ENCODE measurements at regions of chr17 and their contacts with region 1.

Region 1: DNA sequence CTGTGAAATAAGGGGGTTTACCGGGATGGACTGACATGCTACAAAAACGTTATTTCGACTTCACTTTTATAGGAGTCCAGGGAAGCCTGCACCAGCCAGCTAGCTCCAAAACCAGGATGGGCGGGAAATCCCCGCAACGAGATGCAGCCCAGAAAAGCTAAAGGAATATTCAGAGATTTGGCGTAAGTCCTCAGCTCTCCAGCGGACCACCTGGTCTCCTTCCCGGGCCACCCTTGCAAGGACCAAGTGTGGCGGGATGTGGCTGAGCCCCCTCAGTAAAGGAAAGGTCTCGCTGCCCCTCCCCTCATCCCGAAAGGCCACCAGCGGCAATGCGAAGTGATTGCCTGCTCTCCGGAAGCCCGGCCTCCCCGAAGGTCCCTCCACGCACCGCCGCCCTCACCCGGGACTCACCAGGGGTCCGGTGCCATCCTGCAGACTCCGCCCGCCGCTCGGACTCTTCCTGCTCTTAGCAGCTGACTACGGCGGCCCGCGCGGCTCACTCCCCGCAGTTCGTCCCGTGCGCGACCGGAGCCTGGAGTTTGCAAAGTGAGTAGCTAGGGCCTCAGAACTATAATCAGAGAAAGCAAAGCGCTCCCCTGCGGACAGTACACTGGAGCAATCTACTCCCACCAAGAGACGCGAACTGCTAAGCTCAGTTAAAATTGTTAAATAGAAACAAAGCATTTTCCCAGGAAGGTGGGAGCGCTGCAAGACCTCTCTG is at the start of gene STX8:
- DNase-seq: peak; percentile 88
- ATAC-seq: peak; percentile 58
- H3K4me3 Mint-ChIP-seq: peak within 1 kb of the TSS; percentile 93
- H3K27ac Mint-ChIP-seq: no peak within 1 kb of the TSS; the same call in 1 of the 2 replicates
- H3K4me1 Mint-ChIP-seq: peaks cover 9% of the 10 kb centered on the region
- H3K27me3 Mint-ChIP-seq: peaks cover 4% of the 10 kb centered on the region; the same call in 1 of the 2 replicates
- CTCF ChIP-seq: no peak
- total RNA-seq, gene STX8: 39.9 to 55.6 TPM (median 52.8 TPM) in 3 replicates

Region 2: GRCh38 chr17:9587969-9588656 is 12.6 kb after region 1 on chr17:
- CTCF ChIA-PET with region 1: interaction called, 12 read pairs
- POLR2A ChIA-PET with region 1: no interaction called
- DNase-seq: no peak
- ATAC-seq: no peak
- H3K4me3 Mint-ChIP-seq: no peak overlapping the region
- H3K27ac Mint-ChIP-seq: no peak overlapping the region
- H3K4me1 Mint-ChIP-seq: no peaks in the 10 kb centered on the region
- H3K27me3 Mint-ChIP-seq: no peaks in the 10 kb centered on the region
- CTCF ChIP-seq: no peak

Region 3: DNA sequence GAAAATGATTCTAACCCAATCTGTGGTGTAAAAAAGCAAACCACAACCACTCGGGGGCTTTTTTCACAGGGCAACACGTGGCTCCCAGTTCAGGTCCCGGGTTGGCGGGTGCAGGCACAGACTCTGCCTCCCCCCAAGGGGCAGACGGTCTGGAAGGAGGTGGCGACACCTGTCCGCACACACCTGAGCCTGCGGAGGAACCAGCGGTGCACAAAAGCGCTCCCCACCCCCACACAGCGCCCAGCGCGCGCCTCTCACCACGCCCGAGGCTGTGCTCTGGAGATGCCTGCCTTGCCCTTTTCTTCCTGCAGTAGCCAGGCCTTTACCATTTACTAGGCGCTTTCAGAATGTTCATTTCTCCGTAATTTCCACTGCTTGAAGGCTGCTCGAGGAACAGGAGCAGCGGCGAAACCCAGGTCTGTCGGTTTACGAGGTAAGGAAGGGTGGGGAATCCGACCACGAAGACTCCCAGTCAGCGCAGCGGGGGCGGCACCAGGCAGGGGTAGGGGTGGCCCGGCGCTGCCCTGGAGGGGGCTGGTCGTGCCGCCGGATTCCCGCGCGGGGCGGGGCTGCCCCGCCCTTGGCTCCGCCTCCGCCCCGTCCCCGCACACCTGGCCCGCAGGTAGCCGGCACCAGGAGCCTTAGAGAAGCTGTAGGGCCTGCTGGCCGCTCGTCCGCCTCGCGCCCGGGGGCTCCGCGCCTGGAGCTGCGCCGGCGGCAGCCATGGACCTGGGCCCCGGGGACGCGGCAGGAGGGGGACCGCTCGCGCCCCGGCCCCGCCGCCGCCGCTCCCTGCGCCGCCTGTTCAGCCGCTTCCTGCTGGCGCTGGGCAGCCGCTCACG is 69.6 kb after region 1 on chr17 and contains the start of gene USP43:
- CTCF ChIA-PET with region 1: interaction called, 21 read pairs
- POLR2A ChIA-PET with region 1: interaction called, 5 read pairs
- DNase-seq: peak; percentile 74
- ATAC-seq: peak; percentile 74
- H3K4me3 Mint-ChIP-seq: peak within 1 kb of the TSS; percentile 93
- H3K27ac Mint-ChIP-seq: peak within 1 kb of the TSS; percentile 99
- H3K4me1 Mint-ChIP-seq: peaks cover 41% of the 10 kb centered on the region
- H3K27me3 Mint-ChIP-seq: peaks cover 12% of the 10 kb centered on the region
- CTCF ChIP-seq: no peak
- total RNA-seq, gene USP43: 6.8 to 8.6 TPM (median 7.3 TPM) in 3 replicates

Region 4: GRCh38 chr17:9669531-9670008 is 94.0 kb after region 1 on chr17:
- CTCF ChIA-PET with region 1: interaction called, 40 read pairs
- POLR2A ChIA-PET with region 1: no interaction called
- DNase-seq: no peak
- ATAC-seq: no peak
- H3K4me3 Mint-ChIP-seq: no peak overlapping the region
- H3K27ac Mint-ChIP-seq: 0 out of 2 replicates have a peak overlapping the region, but pooled peaks have one; percentile 33
- H3K4me1 Mint-ChIP-seq: peaks cover 33% of the 10 kb centered on the region
- H3K27me3 Mint-ChIP-seq: no peaks in the 10 kb centered on the region
- CTCF ChIP-seq: no peak

Region 5: DNA sequence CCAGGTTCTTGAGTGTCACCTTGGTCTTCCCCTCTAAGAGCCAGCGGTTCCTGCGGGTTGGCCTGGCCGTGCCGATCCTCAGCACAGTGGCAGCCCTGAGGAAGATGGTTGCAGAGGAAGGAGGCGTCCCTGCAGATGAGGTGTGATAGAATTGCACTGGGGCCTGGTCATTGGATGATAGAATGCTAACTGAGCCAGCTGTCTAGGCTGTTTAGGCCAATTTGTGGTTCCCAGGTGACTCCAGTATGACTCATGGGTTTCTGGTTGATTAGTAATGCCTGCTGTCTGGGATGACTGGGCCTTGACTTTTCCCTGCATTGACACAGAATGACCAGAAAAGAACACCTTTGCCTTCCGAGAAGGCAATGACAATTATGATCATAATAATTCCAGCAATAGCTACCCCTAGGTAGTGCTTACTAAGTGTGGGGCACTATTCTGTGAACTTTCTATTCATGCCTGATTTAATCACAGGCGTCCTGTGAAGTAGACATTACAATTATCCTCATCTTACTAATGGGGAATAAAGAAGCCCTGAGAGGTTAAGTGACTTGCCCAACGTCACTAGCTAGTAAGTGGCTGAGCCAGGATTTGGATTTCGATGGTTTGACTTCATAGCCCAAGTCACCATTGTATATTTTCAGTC is 101.3 kb after region 1 on chr17:
- CTCF ChIA-PET with region 1: interaction called, 40 read pairs
- POLR2A ChIA-PET with region 1: no interaction called
- DNase-seq: no peak
- ATAC-seq: no peak
- H3K4me3 Mint-ChIP-seq: no peak overlapping the region
- H3K27ac Mint-ChIP-seq: no peak overlapping the region
- H3K4me1 Mint-ChIP-seq: no peaks in the 10 kb centered on the region
- H3K27me3 Mint-ChIP-seq: no peaks in the 10 kb centered on the region
- CTCF ChIP-seq: no peak

Region 6: GRCh38 chr17:9729034-9729650 is 153.6 kb after region 1 on chr17:
- CTCF ChIA-PET with region 1: interaction called, 10 read pairs
- POLR2A ChIA-PET with region 1: no interaction called
- DNase-seq: no peak
- ATAC-seq: peak; percentile 32; the same call in 1 of the 2 replicates
- H3K4me3 Mint-ChIP-seq: no peak overlapping the region
- H3K27ac Mint-ChIP-seq: no peak overlapping the region
- H3K4me1 Mint-ChIP-seq: no peaks in the 10 kb centered on the region
- H3K27me3 Mint-ChIP-seq: peaks cover 5% of the 10 kb centered on the region; the same call in 1 of the 2 replicates
- CTCF ChIP-seq: peak; percentile 96

Region 7: DNA sequence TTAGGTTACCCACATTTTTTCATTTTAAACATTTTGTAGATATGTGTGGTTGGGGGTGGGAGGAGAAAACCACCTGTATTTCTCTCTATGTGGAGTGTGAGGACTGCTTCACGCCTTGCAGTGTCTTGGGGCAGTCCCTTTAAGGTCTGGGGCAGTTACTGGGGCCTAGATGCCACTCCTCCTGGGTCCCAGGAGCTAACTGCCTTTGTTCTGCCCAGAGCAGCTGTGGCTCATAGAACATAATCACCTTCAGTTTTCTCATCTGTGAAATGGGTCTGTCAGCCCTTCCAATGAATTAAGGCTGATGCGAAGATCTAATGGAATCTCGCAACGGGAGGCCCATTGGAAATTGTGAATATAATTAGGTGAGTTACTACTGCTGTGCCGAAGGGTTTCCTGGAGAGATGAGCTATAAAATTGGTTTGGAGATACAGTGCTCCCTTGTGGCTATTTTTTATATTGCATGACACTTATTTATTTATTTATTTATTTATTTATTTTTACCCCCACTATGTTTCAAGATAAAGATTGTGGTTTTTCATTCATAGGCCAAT is 192.9 kb after region 1 on chr17:
- CTCF ChIA-PET with region 1: interaction called, 31 read pairs
- POLR2A ChIA-PET with region 1: no interaction called
- DNase-seq: no peak
- ATAC-seq: no peak
- H3K4me3 Mint-ChIP-seq: no peak overlapping the region
- H3K27ac Mint-ChIP-seq: no peak overlapping the region
- H3K4me1 Mint-ChIP-seq: no peaks in the 10 kb centered on the region
- H3K27me3 Mint-ChIP-seq: peaks cover 4% of the 10 kb centered on the region; the same call in 1 of the 2 replicates
- CTCF ChIP-seq: peak; percentile 67

Measured in WTC11 (cell line).